ENCODE measurements at regions of chr15 and their contacts with region 1.

Region 1: GRCh38 chr15:48373821-48374451 is 42.7 kb downstream of the DUT start:
- DNase-seq: peak; percentile 84
- H3K4me3 ChIP-seq: peak overlapping the region in 2 of 3 experiments; percentile 22 to 40
- H3K27ac ChIP-seq: no peak overlapping the region
- H3K4me1 ChIP-seq: peaks cover 10% of the 10 kb centered on the region
- H3K27me3 ChIP-seq: no peaks in the 10 kb centered on the region
- CTCF ChIP-seq: no peak
- POLR2A ChIP-seq: no peak

Region 2: GRCh38 chr15:48385031-48385830 is 11.3 kb after region 1 on chr15:
- CTCF ChIA-PET with region 1: interaction called, 11 read pairs
- POLR2A ChIA-PET with region 1: interaction called, 4 read pairs
- dilution Hi-C with region 1: no loop called
- intact Hi-C with region 1: no loop called
- DNase-seq: peak; percentile 93
- H3K4me3 ChIP-seq: no peak overlapping the region
- H3K27ac ChIP-seq: no peak overlapping the region
- H3K4me1 ChIP-seq: peaks cover 35% of the 10 kb centered on the region
- H3K27me3 ChIP-seq: no peaks in the 10 kb centered on the region
- CTCF ChIP-seq: no peak
- POLR2A ChIP-seq: no peak

Region 3: GRCh38 chr15:48392356-48392755 is 18.4 kb after region 1 on chr15:
- CTCF ChIA-PET with region 1: interaction called, 3 read pairs
- POLR2A ChIA-PET with region 1: interaction called, 4 read pairs
- dilution Hi-C with region 1: no loop called
- intact Hi-C with region 1: loop called (anchors 2 kb)
- DNase-seq: peak; percentile 99
- H3K4me3 ChIP-seq: no peak overlapping the region
- H3K27ac ChIP-seq: peak overlapping the region; percentile 78
- H3K4me1 ChIP-seq: peaks cover 36% of the 10 kb centered on the region
- H3K27me3 ChIP-seq: no peaks in the 10 kb centered on the region
- CTCF ChIP-seq: no peak
- POLR2A ChIP-seq: no peak

Region 4: GRCh38 chr15:48888836-48889235 is 514.9 kb after region 1 on chr15:
- CTCF ChIA-PET with region 1: no interaction called
- POLR2A ChIA-PET with region 1: no interaction called
- dilution Hi-C with region 1: no loop called
- intact Hi-C with region 1: no loop called
- DNase-seq: no peak
- H3K4me3 ChIP-seq: no peak overlapping the region
- H3K27ac ChIP-seq: no peak overlapping the region
- H3K4me1 ChIP-seq: no peaks in the 10 kb centered on the region
- H3K27me3 ChIP-seq: peaks cover 2 to 4% of the 10 kb centered on the region in 2 experiments
- CTCF ChIP-seq: no peak
- POLR2A ChIP-seq: no peak

Measured in endothelial cell of umbilical vein (primary cell).